ENCODE measurements at regions of chr16 and their contacts with region 1.

Region 1: GRCh38 chr16:50245417-50246298 is 20.7 kb upstream of the ADCY7 start:
- DNase-seq: peak; percentile 88

Region 2: DNA sequence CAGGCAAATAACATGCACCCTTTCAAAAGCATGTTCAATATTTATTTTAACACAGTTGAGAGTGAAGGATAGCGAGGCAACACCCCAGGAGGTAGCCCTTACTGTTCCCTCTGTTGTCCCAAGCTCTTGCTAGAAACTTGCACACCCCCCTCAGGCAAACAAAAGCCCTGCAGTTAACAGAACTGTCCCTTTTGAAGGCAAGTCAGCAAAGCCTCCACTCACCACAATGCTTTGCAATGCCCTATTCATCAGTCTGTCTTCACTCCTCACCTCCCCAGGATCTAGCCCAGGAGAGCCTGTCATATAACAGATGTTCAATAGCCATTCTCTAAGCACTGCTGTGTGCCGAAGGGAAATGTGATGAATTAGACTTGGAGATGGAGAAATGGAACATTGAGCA is 224.1 kb before region 1 on chr16:
- intact Hi-C with region 1: no loop called
- DNase-seq: no peak

Region 3: DNA sequence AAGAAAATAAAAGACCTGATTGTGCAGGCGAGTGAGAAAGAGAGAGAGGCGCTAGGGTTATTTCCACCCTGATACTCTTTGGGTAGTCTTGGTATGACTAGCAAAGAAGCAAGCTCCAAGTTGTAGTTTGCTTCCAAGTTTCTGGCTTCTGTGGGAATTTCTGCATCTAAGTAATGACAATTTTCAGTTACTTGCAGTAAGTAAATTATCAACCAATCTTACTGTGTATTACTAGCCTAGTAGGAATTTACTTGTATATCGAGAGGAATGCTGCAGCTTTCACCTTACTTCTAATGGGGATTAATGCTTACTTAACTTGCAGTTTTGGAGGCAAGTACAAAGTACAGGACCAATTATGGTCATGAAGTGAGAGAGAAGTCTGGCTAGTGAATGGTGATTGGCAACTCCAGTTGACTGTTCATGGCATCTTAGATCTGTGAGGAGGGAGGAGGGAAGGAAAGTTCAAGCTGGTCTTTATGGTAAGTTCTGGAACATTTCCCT is 60.6 kb before region 1 on chr16:
- intact Hi-C with region 1: no loop called
- DNase-seq: no peak

Region 4: DNA sequence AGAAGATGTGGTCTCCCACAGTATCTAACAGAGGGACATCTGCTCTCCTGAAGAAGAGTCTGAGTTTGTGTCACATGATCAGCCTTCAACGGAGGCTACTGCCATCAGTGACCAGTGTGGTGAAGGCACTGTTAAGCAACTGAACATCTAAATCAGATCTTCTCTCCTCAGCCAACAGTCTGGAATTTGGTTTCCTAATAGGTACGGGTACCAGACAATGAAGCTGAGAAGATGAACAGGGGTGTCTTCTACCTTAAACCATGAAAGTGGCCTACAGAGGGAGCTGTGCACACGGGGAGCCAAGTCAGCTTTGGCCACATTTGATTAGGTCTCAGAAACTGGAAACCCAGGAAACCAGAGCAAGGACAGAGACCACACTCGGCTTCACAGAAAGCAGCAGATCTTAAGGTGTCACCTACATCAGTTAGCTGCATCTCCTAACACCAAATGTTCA is 81.3 kb after region 1 on chr16:
- intact Hi-C with region 1: loop called in 1 of 2 experiments (anchors 10 kb)
- DNase-seq: no peak

Region 5: GRCh38 chr16:50354629-50355456 is 109.2 kb after region 1 on chr16:
- intact Hi-C with region 1: loop called (anchors 10 kb)
- DNase-seq: no peak

Region 6: GRCh38 chr16:50573947-50574744 is 328.5 kb after region 1 on chr16:
- intact Hi-C with region 1: no loop called
- DNase-seq: no peak